Common myeloid progenitor, CD34-positive (primary cell): ENCODE measurements at regions of chr2 and their contacts with region 1.

Region 1: DNA sequence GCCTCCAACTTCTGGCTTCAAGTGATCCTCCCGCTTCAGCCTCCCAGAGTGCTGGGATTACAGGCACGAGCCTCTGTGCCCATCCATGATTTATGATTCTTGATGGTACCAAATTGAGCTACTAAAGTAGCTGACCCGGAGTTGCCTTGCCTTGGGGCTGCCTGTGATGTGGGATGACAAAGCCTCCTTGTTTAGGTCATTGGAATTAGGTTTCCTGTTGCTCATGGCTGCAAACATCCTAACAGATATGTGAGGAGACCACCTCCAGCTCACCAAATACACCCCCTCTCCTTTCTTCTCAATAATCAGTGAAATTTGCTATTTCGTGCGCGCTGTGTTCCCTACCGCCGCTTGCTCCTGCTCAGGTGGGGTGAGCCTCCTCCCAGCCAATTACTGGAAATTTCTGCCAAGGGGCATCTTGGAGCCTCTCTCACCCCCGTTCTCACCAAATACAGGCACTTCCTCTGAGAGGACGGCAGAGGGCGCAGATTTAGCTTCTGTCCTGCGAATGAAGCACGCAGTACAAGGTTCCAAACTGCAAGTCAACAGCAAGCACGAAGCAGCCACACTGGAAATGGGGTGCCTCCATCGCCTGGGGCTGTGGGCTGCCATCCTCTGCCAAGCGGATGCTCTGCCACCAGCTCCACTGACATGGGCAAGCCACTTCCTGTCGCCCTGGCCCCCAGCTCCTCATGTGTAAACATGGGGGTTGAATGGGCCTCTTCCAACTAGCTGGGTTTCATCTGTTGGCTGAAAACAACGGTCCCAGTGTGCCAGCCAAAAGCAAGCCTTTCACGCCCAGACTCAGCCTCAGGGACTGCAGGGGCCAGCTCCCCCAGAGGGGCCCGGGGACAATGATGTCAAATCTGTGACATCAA is 71.7 kb downstream of the NCAPH start:
- DNase-seq: peak; percentile 85 to 92 (median 91)
- H3K4me3 ChIP-seq: peak overlapping the region in 2 of 7 experiments; percentile 22 to 45
- H3K27ac ChIP-seq: no peak overlapping the region
- H3K4me1 ChIP-seq: peaks cover 0 to 23% (median 14%) of the 10 kb centered on the region in 4 experiments
- H3K27me3 ChIP-seq: peaks cover 0 to 2% (median 0%) of the 10 kb centered on the region in 5 experiments

Region 2: GRCh38 chr2:96396095-96396494 is 11.2 kb before region 1 on chr2:
- CTCF ChIA-PET with region 1: interaction called, 10 read pairs
- POLR2A ChIA-PET with region 1: no interaction called
- DNase-seq: no peak
- H3K4me3 ChIP-seq: no peak overlapping the region
- H3K27ac ChIP-seq: no peak overlapping the region
- H3K4me1 ChIP-seq: peaks cover 0 to 10% (median 2%) of the 10 kb centered on the region in 4 experiments
- H3K27me3 ChIP-seq: peaks cover 0 to 2% (median 0%) of the 10 kb centered on the region in 5 experiments

Region 3: DNA sequence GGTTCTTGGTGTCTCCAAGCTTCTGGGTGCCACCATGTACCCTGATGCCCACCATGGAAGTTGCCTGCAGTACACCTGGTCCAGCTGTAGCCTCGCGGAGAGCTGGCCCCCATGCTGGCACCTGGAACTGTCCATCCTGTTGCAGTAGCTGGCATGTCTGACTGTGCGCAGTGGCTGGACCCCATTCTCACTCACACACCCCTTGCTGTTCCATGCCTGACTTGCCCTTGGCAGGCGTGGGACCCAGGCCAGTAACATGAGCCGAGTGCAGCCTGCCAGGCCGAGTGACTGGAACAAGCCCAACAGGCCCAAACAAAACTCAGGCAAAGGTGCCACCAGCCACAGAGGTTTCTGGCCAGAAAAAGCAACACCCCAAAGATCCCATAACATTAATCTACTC is 24.0 kb after region 1 on chr2:
- CTCF ChIA-PET with region 1: interaction called, 15 read pairs
- POLR2A ChIA-PET with region 1: no interaction called
- DNase-seq: no peak
- H3K4me3 ChIP-seq: no peak overlapping the region
- H3K27ac ChIP-seq: no peak overlapping the region
- H3K4me1 ChIP-seq: no peaks in the 10 kb centered on the region
- H3K27me3 ChIP-seq: peaks cover 0 to 2% (median 0%) of the 10 kb centered on the region in 5 experiments